ENCODE measurements at regions of chr20 and their contacts with region 1.

Region 1: GRCh38 chr20:8082025-8082424 is 50.0 kb upstream of the PLCB1 start:
- DNase-seq: no peak
- H3K4me3 ChIP-seq: no peak overlapping the region
- H3K27ac ChIP-seq: no peak overlapping the region
- H3K4me1 ChIP-seq: no peaks in the 10 kb centered on the region
- H3K27me3 ChIP-seq: no peaks in the 10 kb centered on the region
- CTCF ChIP-seq: peak; percentile 46 to 57

Region 2: GRCh38 chr20:7622399-7622961 is 459.5 kb before region 1 on chr20:
- CTCF ChIA-PET with region 1: no interaction called
- dilution Hi-C with region 1: no loop called
- in situ Hi-C with region 1: no loop called
- intact Hi-C with region 1: no loop called
- DNase-seq: no peak
- H3K4me3 ChIP-seq: no peak overlapping the region
- H3K27ac ChIP-seq: no peak overlapping the region
- H3K4me1 ChIP-seq: peaks cover 10% of the 10 kb centered on the region
- H3K27me3 ChIP-seq: no peaks in the 10 kb centered on the region
- CTCF ChIP-seq: no peak

Region 3: GRCh38 chr20:8057871-8058270 is 24.2 kb before region 1 on chr20:
- CTCF ChIA-PET with region 1: interaction called, 10 read pairs
- dilution Hi-C with region 1: no loop called
- in situ Hi-C with region 1: no loop called
- intact Hi-C with region 1: no loop called
- DNase-seq: no peak
- H3K4me3 ChIP-seq: no peak overlapping the region
- H3K27ac ChIP-seq: no peak overlapping the region
- H3K4me1 ChIP-seq: no peaks in the 10 kb centered on the region
- H3K27me3 ChIP-seq: no peaks in the 10 kb centered on the region
- CTCF ChIP-seq: no peak

Region 4: DNA sequence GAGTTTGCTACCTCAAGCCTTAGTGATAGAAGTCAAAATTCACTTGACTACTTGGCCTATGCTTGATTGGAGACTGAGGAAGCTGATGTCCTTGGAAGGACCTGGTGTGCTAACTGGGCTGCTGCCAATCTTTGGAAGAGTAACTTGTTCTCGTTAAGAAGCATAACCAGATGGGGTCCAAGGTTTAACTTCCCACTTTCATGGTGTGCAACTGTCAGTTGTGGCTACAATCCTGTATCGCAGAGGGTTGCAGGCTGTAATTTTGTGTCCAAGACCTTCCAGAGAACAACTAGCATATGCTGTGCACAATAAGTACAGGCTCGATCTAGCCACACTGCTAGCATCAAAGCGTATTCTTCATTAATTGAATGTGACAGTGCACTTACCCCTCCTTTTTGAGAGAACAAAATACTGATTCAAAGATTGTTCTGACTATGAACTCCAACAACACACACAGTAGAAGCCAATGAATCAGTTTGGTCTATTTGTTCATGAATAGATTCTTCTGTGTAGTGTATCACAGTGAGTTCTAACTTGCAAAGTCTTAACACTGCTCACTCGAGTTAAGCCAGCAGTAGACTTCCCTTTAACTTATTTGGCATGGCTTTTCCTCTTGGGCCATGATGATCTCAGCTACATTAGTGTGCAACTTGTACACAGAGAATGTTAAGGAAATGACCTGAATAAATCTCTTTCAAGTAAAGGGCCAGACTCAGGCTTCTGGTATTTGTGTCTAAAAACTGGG is 34.2 kb after region 1 on chr20:
- CTCF ChIA-PET with region 1: no interaction called
- dilution Hi-C with region 1: no loop called
- in situ Hi-C with region 1: no loop called
- intact Hi-C with region 1: no loop called
- DNase-seq: no peak
- H3K4me3 ChIP-seq: no peak overlapping the region
- H3K27ac ChIP-seq: no peak overlapping the region
- H3K4me1 ChIP-seq: no peaks in the 10 kb centered on the region
- H3K27me3 ChIP-seq: no peaks in the 10 kb centered on the region
- CTCF ChIP-seq: no peak

Measured in mammary epithelial cell (primary cell).